ENCODE measurements at regions of chr6 and their contacts with region 1.

Region 1: DNA sequence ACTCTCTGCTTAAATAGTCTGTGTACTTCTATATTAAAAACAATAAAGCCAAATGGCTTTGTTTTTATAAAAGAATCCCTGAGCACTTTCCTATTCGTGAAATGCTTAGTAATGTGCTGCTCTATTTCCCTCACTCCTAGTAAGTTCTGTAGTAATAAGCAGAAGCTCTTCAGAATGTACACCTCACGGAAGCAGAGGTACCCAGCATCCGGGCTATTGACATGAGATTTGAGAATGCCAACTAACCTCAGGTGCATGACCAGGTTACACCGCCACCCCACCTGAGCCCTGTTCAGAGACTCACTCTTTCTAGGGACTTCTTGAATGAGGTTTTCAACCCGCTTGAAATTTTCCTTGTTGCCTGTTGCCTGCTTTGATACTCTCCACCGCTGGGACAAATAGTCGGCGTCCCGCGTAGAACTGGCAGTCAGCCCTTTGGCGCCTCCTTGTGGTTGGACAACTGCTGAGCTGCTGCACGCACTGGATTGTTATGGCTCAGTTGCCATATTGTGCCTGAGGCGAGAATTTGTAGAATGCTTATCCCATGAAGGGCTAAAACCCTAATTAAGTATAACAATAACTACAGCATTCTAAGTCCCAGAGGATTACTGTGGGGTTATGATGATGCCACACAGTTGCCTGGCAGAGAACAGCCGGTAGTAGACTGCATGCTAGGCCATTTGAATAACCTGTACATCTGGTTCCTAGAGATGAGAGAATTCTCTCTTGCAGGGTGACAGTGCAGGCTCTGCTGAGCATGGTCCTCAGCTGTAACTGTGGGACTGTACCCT is 95.4 kb downstream of the KHDC1L start:
- DNase-seq: peak; percentile 73 to 88
- H3K4me3 ChIP-seq: no peak overlapping the region
- H3K4me3 Mint-ChIP-seq: no peak overlapping the region
- H3K27ac Mint-ChIP-seq: no peak overlapping the region
- H3K4me1 ChIP-seq: no peaks in the 10 kb centered on the region
- H3K4me1 Mint-ChIP-seq: no peaks in the 10 kb centered on the region
- H3K27me3 ChIP-seq: no peaks in the 10 kb centered on the region; the same call in 1 of the 2 replicates
- H3K27me3 Mint-ChIP-seq: peaks cover 13% of the 10 kb centered on the region
- CTCF ChIP-seq: peak; percentile 97

Region 2: DNA sequence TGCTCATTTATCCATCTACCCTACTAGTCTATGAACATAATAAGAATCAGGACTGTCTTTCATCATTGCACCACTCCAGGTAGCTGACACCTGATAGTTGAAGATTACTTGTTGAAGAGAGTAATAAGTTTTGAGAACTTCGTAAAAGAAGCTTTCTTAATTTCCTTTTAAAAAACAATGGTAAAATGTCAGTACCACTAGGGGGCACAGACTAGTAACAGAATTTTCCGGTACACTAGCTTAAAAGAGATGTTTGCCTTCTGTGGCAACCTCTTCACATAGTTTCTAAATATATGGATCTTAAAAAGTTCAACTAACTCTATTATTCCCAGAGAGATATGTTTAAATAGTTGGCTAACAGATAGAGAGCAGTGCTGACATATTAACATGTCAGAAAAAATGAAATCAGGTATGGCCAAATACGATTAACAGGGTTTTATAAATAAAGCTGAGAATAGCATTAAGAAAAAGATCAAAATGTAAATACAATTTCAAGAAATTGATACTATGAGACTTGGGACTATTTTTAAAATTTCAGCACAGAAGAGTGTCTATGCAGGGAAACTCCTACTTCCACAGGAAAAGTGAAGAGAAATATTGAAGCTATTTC is 513.3 kb before region 1 on chr6:
- CTCF ChIA-PET with region 1: interaction called, 23 read pairs
- POLR2A ChIA-PET with region 1: no interaction called
- intact Hi-C with region 1: loop called (anchors 1 kb)
- DNase-seq: no peak
- H3K4me3 ChIP-seq: no peak overlapping the region
- H3K4me3 Mint-ChIP-seq: no peak overlapping the region
- H3K27ac Mint-ChIP-seq: no peak overlapping the region
- H3K4me1 ChIP-seq: no peaks in the 10 kb centered on the region
- H3K4me1 Mint-ChIP-seq: peaks cover 7% of the 10 kb centered on the region
- H3K27me3 ChIP-seq: no peaks in the 10 kb centered on the region
- H3K27me3 Mint-ChIP-seq: peaks cover 19% of the 10 kb centered on the region
- CTCF ChIP-seq: peak; percentile 52 to 57

Region 3: GRCh38 chr6:72704979-72705378 is 424.9 kb before region 1 on chr6:
- CTCF ChIA-PET with region 1: no interaction called
- POLR2A ChIA-PET with region 1: no interaction called
- intact Hi-C with region 1: loop called (anchors 1 kb)
- DNase-seq: peak in 1 of 2 experiments; percentile 16
- H3K4me3 ChIP-seq: no peak overlapping the region
- H3K4me3 Mint-ChIP-seq: no peak overlapping the region
- H3K27ac Mint-ChIP-seq: no peak overlapping the region
- H3K4me1 ChIP-seq: no peaks in the 10 kb centered on the region
- H3K4me1 Mint-ChIP-seq: no peaks in the 10 kb centered on the region
- H3K27me3 ChIP-seq: no peaks in the 10 kb centered on the region
- H3K27me3 Mint-ChIP-seq: peaks cover 9% of the 10 kb centered on the region
- CTCF ChIP-seq: peak in 1 of 2 experiments; percentile 35

Region 4: GRCh38 chr6:72784581-72784980 is 345.3 kb before region 1 on chr6:
- CTCF ChIA-PET with region 1: no interaction called
- POLR2A ChIA-PET with region 1: no interaction called
- intact Hi-C with region 1: no loop called
- DNase-seq: no peak
- H3K4me3 ChIP-seq: no peak overlapping the region
- H3K4me3 Mint-ChIP-seq: no peak overlapping the region
- H3K27ac Mint-ChIP-seq: no peak overlapping the region
- H3K4me1 ChIP-seq: no peaks in the 10 kb centered on the region
- H3K4me1 Mint-ChIP-seq: no peaks in the 10 kb centered on the region
- H3K27me3 ChIP-seq: no peaks in the 10 kb centered on the region
- H3K27me3 Mint-ChIP-seq: peaks cover 5% of the 10 kb centered on the region
- CTCF ChIP-seq: no peak

Region 5: GRCh38 chr6:73180763-73181619 is 51.1 kb after region 1 on chr6:
- CTCF ChIA-PET with region 1: no interaction called
- POLR2A ChIA-PET with region 1: no interaction called
- intact Hi-C with region 1: loop called (anchors 5 kb)
- DNase-seq: peak in 1 of 2 experiments; percentile 17
- H3K4me3 ChIP-seq: no peak overlapping the region
- H3K4me3 Mint-ChIP-seq: no peak overlapping the region
- H3K27ac Mint-ChIP-seq: no peak overlapping the region
- H3K4me1 ChIP-seq: no peaks in the 10 kb centered on the region
- H3K4me1 Mint-ChIP-seq: no peaks in the 10 kb centered on the region
- H3K27me3 ChIP-seq: no peaks in the 10 kb centered on the region
- H3K27me3 Mint-ChIP-seq: peaks cover 4% of the 10 kb centered on the region
- CTCF ChIP-seq: peak; percentile 58 to 86

Measured in Caco-2 (cell line).